Mucosa of descending colon (tissue), 3 donors: ENCODE measurements at regions of chr4 and their contacts with region 1.

Region 1: DNA sequence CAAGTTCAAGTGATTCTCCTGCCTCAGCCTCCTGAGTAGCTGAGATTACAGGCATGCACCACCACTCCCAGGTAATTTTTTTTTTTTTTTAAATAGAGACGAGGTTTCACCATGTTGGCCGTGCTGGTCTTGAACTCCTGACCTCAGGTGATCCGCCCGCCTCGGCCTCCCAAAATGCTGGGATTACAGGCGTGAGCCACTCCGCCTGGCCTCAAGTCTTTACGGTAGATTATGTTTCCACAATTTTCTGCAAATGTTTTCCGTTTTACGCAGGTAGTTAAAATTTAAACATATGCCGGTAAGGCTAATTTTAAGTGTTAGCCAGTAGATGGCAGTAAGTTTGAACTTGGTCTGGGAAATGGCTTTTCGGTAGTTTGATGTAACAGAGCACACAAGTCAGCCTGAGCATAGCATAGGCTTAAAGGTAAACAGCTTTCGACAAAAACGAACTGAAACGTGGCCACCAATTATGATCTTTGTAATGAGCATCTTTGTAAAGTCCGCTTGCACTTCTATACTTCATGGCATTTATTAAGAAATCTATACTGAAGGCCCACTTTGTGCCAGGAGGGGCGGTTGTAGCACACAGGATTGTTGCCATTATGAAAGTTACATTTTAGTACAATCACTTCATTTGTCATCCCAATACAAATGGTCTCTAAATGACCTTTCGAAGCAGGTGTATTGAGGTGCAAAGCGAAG is 31.1 kb downstream of the CCKAR start:
- DNase-seq: no peak
- ATAC-seq: peak; percentile 77
- H3K4me3 ChIP-seq: no peak overlapping the region
- H3K4me1 ChIP-seq: no peaks in the 10 kb centered on the region
- CTCF ChIP-seq: no peak

Region 2: DNA sequence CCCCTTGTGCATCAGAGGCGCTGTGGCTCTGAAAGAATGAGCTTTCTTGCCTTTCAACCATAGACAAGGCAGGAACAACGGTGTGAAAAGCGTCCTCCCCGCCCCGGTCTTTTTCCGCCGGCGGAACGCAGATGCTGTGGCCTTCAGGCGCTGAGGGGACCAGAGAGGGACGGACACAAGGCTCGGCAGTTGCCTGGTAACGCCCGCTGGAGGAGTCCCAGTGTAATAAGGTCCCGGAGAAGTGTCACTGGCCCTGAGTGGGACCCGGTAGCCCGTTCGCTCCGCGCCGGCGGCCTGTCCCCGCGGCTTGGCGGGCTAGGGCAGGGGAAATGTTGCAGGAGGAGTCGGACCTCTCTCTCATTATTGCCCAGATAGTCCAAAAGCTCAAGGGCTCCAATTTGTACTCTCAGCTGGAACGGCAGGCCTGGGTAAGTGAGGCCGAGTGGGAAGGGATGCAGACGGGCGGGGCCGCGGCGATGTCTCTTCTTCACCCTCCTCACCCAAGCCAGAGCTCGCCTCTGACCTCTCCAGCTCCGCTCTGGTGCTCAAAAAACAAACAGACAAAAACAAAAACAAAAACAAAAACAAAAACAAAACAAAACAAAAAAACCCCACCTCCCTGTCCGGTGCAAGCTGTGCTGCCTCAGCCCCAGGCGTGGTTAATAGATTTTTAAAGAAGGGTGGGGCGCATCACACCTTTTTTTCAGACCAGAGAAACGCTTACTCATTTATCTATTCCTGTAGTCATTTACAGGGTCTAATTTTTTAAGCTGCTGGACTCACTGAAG is 124.9 kb after region 1 on chr4 and contains the start of gene TBC1D19:
- intact Hi-C with region 1: loop called in 1 of 2 experiments (anchors 10 kb)
- DNase-seq: peak; percentile 90 to 93 (median 91)
- ATAC-seq: peak; percentile 100
- H3K4me3 ChIP-seq: peak within 1 kb of the TSS; percentile 29
- H3K4me1 ChIP-seq: peaks cover 5% of the 10 kb centered on the region
- CTCF ChIP-seq: no peak
- total RNA-seq, gene TBC1D19: 3.7 to 11.6 (median 6.8) TPM

Region 3: DNA sequence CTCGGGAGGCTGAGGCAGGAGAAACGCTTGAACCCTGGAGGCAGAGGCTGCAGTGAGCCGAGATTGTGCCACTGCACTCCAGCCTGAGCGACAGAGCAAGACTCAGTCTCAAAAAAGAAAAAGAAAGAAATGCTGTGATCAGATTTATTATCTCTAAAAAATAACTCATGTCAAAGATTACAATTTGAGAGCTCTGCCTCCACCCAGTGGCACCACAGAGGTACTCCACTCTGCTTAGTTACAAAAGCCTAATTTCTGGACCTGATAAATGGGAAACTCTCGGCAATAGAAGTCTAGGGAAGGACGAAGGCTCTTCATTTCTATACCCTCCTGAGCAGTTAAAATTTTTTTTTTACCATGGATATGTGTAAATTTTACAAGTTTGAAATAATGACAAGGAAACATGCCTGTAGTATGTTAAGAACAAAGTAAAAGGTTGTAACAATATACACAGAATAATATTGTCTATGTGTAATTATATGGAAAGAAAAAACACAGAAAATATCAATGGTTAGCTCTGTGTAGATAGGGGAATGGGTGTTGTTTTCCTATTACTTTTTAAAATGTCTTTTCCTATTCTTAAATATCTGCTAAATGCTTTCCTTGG is 551.2 kb after region 1 on chr4:
- intact Hi-C with region 1: loop called in 1 of 2 experiments (anchors 10 kb)
- DNase-seq: peak in 2 of 3 donors; percentile 60 to 63
- ATAC-seq: peak; percentile 86
- H3K4me3 ChIP-seq: no peak overlapping the region
- H3K4me1 ChIP-seq: no peaks in the 10 kb centered on the region
- CTCF ChIP-seq: peak; percentile 77